GM13977 (cell line): ENCODE measurements at regions of chr17 and their contacts with region 1.

Region 1: GRCh38 chr17:35119368-35120165 is at the start of gene RAD51D:
- DNase-seq: peak; percentile 94
- CTCF ChIP-seq: peak; percentile 98

Region 2: GRCh38 chr17:34420254-34420766 is 699.3 kb before region 1 on chr17:
- in situ Hi-C with region 1: loop called (anchors 25 kb)
- DNase-seq: peak; percentile 74
- CTCF ChIP-seq: peak; percentile 86

Region 3: DNA sequence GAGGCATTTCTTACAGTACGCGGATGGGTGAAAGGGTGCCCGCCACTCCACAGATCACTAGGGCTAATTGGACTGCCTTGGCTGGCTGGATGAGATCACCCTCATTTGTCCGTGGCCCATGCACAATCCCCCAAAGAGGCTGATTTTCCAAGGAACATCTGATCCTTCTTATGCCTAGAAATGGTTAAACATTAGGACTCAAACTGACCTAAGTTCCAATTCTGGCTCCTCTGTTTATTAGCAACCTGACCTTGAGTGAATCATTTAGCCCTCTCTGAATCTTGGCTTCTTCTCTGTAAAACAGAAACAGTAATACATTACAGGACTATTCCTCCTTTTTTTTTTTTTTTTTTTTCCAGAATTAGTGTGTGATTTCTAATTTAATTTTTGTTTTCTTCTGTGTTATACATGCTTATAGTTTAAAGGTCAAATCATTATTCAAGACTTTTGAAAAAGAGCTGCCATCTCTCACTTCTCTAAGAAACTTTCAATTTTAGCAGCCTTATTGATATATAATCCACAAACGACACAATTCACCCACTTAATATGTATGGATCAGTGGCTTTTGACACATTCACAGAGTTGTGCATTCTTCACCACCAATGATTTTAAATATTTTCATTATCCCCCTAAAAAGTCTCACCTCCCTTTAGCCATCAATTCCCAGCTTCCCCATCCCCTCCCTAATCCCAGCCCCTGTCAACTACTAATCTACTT is 585.6 kb before region 1 on chr17:
- in situ Hi-C with region 1: loop called (anchors 10 kb)
- DNase-seq: no peak
- CTCF ChIP-seq: no peak